Dendritic cell treated with granulocyte-macrophage colony-stimulating factor and Interleukin-4, amounts not matched to agents 40 ng/mL and 50 ng/mL, for 4 days (primary cell): ENCODE measurements at regions of chr14 and their contacts with region 1.

Region 1: GRCh38 chr14:68359837-68360552 is 432.9 kb downstream of the ZFP36L1 start:
- H3K4me3 Mint-ChIP-seq: no peak overlapping the region
- H3K27ac Mint-ChIP-seq: peak overlapping the region; percentile 89
- H3K4me1 Mint-ChIP-seq: peaks cover 46% of the 10 kb centered on the region
- H3K27me3 Mint-ChIP-seq: no peaks in the 10 kb centered on the region

Region 2: GRCh38 chr14:68309476-68310015 is 50.4 kb before region 1 on chr14:
- intact Hi-C with region 1: loop called (anchors 2 kb)
- H3K4me3 Mint-ChIP-seq: no peak overlapping the region
- H3K27ac Mint-ChIP-seq: peak overlapping the region; percentile 82
- H3K4me1 Mint-ChIP-seq: peaks cover 40% of the 10 kb centered on the region
- H3K27me3 Mint-ChIP-seq: no peaks in the 10 kb centered on the region

Region 3: DNA sequence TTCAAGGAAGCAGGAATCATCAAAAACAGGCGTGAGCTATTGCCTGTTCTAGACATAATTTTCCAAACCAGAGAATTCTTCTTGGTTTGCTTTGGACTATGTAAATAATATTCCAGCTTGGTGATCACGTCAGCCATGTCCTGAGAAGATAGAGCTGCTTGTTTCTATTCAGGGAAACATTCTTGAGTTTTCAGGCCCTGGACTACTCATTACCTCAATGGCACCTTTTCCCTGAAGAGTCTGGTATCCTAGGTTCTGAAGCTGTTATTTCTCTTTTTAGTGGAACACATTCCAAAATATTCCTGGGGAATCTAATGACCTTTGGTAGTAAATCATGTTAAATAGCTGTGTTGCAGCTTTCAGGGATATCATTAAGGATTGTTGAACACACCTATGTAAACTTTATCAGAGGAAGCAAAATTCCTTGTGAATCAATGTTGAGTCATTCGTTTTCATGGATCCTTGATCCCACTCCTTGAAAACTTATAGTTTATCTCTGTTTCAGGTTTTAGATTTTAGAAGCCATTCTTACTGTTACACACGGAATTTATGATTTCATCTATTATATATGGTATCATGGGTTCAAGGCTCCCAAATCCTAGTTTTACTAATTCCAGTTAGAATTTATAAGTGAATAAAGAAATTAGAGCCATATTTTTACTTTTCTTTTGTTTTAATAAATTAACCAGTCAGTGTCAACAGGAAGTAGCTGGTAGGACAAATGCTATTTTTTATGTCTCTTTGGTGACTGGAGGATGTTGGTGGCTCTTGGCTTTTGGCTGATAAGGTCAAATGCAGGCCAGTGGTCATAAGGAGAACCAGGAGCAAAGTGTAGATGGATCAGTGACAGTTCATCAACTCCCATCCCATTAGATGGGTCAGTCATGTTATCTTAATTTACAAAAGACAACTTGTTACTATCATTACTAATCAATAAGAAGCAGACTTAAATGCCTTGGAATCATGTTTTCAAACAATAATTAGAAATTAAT is 52.8 kb after region 1 on chr14:
- intact Hi-C with region 1: no loop called
- H3K4me3 Mint-ChIP-seq: no peak overlapping the region
- H3K27ac Mint-ChIP-seq: no peak overlapping the region
- H3K4me1 Mint-ChIP-seq: peaks cover 28% of the 10 kb centered on the region
- H3K27me3 Mint-ChIP-seq: no peaks in the 10 kb centered on the region

Region 4: DNA sequence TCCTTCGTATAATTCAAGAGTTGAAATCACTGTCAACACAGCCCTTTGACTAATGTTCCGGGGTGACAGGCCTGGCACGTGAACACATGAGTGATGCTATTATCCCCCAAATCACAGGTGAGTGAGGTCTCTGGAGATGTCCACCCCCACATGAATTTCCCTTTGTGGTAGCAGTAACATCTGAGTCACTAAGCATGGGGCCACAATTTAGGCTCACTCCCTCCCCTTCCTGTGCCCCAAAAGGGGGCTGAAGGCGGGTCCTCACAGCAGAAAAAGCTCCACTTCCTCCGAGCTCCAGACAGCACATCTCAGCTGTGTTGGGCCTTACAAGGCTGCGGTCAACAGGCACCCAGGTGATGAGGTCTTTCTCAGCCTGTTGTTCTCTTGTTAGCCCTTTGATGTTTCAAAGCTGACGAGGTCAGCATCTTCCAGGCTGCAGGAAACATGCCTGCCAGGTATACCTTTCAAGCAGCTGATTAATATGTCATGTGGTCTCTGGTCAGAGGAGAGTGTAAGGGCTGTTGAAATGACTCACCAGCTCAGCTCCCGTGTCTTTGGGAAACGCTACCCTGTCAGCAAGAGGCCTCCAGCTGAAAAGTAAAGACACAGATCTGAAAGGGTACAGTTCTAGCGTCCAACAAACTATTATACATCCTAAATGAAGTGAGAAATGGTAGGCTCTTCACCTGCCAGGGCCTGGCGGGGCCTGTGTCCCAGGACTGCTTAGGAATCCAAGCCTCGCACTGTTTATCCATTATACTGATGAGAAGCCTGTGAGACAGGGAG is 325.6 kb after region 1 on chr14:
- intact Hi-C with region 1: no loop called
- H3K4me3 Mint-ChIP-seq: no peak overlapping the region
- H3K27ac Mint-ChIP-seq: peak overlapping the region; percentile 99
- H3K4me1 Mint-ChIP-seq: peaks cover 83% of the 10 kb centered on the region
- H3K27me3 Mint-ChIP-seq: no peaks in the 10 kb centered on the region